SK-N-SH (cell line): ENCODE measurements at regions of chr10 and their contacts with region 1.

Region 1: GRCh38 chr10:96017191-96017687 is 26.1 kb upstream of the CCNJ start:
- DNase-seq: peak; percentile 42
- H3K4me3 ChIP-seq: no peak overlapping the region; a peak in 1 of 4 replicates
- H3K27ac ChIP-seq: no peak overlapping the region
- H3K4me1 ChIP-seq: no peaks in the 10 kb centered on the region
- H3K27me3 ChIP-seq: no peaks in the 10 kb centered on the region
- CTCF ChIP-seq: peak; percentile 92
- EP300 ChIP-seq: no peak
- RAD21 ChIP-seq: peak; percentile 82

Region 2: GRCh38 chr10:95896071-95896846 is 121.0 kb before region 1 on chr10:
- CTCF ChIA-PET with region 1: no interaction called
- POLR2A ChIA-PET with region 1: no interaction called
- DNase-seq: no peak
- H3K4me3 ChIP-seq: no peak overlapping the region
- H3K27ac ChIP-seq: no peak overlapping the region
- H3K4me1 ChIP-seq: no peaks in the 10 kb centered on the region
- H3K27me3 ChIP-seq: no peaks in the 10 kb centered on the region
- CTCF ChIP-seq: no peak
- EP300 ChIP-seq: no peak
- RAD21 ChIP-seq: no peak

Region 3: GRCh38 chr10:95998255-95998784 is 18.9 kb before region 1 on chr10:
- CTCF ChIA-PET with region 1: interaction called, 72 read pairs
- POLR2A ChIA-PET with region 1: no interaction called
- DNase-seq: no peak
- H3K4me3 ChIP-seq: no peak overlapping the region
- H3K27ac ChIP-seq: no peak overlapping the region
- H3K4me1 ChIP-seq: no peaks in the 10 kb centered on the region
- H3K27me3 ChIP-seq: no peaks in the 10 kb centered on the region
- CTCF ChIP-seq: no peak
- EP300 ChIP-seq: no peak
- RAD21 ChIP-seq: no peak

Region 4: DNA sequence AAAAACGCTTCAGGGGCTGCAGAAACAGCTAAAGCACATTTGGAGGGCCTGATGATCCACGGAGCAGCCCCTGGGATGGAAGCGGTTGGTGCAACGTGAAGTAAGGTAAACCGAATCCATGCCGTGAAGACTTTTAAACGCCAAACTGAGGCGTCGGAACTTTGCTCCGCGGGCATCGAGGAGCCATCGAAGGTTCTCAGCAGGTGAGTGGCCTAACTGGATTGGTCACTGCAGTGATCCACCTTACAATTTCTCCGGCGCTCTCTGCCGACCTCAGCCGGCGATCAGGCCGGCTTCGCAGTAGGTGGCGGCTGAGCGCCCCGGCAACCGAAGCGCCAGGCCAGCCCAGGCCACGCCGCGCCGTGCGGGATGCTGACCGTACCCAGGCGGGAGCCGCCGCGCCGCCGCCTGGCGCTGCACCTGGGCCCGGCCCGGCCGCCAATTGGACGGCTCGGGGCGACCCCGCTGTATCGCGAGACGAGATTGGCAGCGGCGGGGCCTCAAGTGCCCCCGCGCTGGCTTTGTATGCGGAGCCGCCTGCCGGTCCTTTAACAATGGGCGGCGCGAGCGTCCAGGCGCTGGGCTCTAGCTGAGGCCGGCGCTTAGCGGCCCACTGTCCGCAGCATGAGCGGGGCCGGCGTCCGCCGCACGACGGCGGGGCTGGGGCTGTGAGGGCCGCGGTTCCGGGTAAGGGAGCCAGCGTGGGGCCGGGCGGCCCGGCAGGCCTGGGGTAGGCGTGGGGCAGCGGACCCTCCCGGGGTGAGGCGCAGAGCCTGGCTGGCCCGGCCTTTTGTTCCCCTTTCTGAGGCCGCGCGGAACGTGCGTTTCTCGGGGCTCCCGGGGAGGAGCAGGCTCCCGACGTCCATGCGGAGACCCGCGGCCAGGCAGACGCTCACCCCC is 26.0 kb after region 1 on chr10 and contains the start of gene CCNJ:
- CTCF ChIA-PET with region 1: interaction called, 13 read pairs
- POLR2A ChIA-PET with region 1: no interaction called
- DNase-seq: peak; percentile 99
- H3K4me3 ChIP-seq: peak within 1 kb of the TSS; percentile 76 to 92
- H3K27ac ChIP-seq: peak within 1 kb of the TSS; percentile 75 to 89
- H3K4me1 ChIP-seq: peaks cover 0 to 6% of the 10 kb centered on the region in 2 experiments; a peak in 2 of 4 replicates
- H3K27me3 ChIP-seq: no peaks in the 10 kb centered on the region
- CTCF ChIP-seq: no peak
- EP300 ChIP-seq: no peak
- RAD21 ChIP-seq: no peak
- polyA plus RNA-seq, gene CCNJ: 4.3 and 5.6 TPM in 2 replicates

Region 5: GRCh38 chr10:96287392-96288105 is 270.3 kb after region 1 on chr10:
- CTCF ChIA-PET with region 1: interaction called, 112 read pairs
- POLR2A ChIA-PET with region 1: no interaction called
- DNase-seq: no peak
- H3K4me3 ChIP-seq: no peak overlapping the region
- H3K27ac ChIP-seq: no peak overlapping the region
- H3K4me1 ChIP-seq: peaks cover 0 to 2% of the 10 kb centered on the region in 2 experiments; a peak in 2 of 4 replicates
- H3K27me3 ChIP-seq: no peaks in the 10 kb centered on the region
- CTCF ChIP-seq: no peak
- EP300 ChIP-seq: no peak
- RAD21 ChIP-seq: no peak

Region 6: DNA sequence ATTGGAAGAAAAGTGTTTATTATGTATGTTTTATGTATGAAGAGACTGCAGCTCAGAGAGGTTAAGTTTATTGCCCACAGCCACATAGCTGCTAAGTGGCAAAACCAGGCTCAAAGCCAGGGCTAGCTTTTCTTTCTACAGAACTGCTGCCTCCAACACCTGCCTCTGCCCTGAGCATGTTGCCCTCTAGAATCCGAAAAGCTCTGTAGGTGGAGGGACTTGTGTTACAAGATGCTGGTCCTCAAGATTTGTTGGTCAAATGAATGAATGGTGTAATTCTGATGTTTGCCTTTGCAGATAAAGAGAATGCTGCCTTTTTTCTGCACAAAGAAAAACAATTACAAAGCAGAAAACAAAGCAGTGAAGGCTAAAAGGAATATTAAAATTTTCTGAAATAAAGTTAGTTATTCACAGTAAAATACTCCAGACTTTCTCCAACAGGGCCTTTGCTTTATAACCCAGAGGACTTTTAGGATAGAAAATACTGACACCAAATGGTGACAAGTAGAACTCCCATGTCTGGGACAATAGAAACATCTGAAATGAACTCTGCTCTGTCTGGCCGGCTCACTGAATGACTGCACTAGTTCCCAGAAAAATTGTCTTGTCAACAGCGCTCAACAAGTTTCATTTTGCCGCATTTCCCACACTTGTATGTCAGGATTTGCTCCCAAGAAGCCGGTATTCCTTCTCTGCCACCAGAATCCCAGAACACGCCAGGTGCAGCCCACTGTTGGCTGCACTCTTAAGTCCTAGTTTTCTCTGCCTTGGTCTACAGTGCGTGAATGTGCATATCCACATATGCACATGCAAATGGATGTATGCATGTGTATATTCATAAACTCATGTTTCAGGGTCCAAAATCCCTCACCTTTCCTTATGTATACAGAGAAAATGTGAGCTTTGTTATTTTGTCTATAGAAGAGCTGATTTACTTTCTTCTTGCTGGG is 276.0 kb after region 1 on chr10:
- CTCF ChIA-PET with region 1: interaction called, 112 read pairs
- POLR2A ChIA-PET with region 1: no interaction called
- DNase-seq: peak; percentile 36
- H3K4me3 ChIP-seq: peak overlapping the region in 1 of 2 experiments; percentile 5; a peak in 1 of 4 replicates
- H3K27ac ChIP-seq: no peak overlapping the region
- H3K4me1 ChIP-seq: no peaks in the 10 kb centered on the region; a peak in 1 of 4 replicates
- H3K27me3 ChIP-seq: no peaks in the 10 kb centered on the region
- CTCF ChIP-seq: peak; percentile 64
- EP300 ChIP-seq: no peak
- RAD21 ChIP-seq: peak; percentile 83

Region 7: GRCh38 chr10:96334616-96335526 is 317.6 kb after region 1 on chr10:
- CTCF ChIA-PET with region 1: interaction called, 13 read pairs
- POLR2A ChIA-PET with region 1: no interaction called
- DNase-seq: peak; percentile 47
- H3K4me3 ChIP-seq: no peak overlapping the region; a peak in 1 of 4 replicates
- H3K27ac ChIP-seq: no peak overlapping the region
- H3K4me1 ChIP-seq: no peaks in the 10 kb centered on the region
- H3K27me3 ChIP-seq: no peaks in the 10 kb centered on the region; the same call in 1 of the 2 replicates
- CTCF ChIP-seq: peak; percentile 78
- EP300 ChIP-seq: no peak
- RAD21 ChIP-seq: peak; percentile 57

Region 8: GRCh38 chr10:96339957-96340904 is 323.0 kb after region 1 on chr10:
- CTCF ChIA-PET with region 1: interaction called, 12 read pairs
- POLR2A ChIA-PET with region 1: no interaction called
- DNase-seq: peak; percentile 45
- H3K4me3 ChIP-seq: peak overlapping the region in 1 of 2 experiments; percentile 20; a peak in 1 of 4 replicates
- H3K27ac ChIP-seq: no peak overlapping the region
- H3K4me1 ChIP-seq: no peaks in the 10 kb centered on the region
- H3K27me3 ChIP-seq: no peaks in the 10 kb centered on the region; the same call in 1 of the 2 replicates
- CTCF ChIP-seq: peak; percentile 75
- EP300 ChIP-seq: no peak
- RAD21 ChIP-seq: peak; percentile 69